PC-9 (cell line): ENCODE measurements at regions of chr9 and their contacts with region 1.

Region 1: DNA sequence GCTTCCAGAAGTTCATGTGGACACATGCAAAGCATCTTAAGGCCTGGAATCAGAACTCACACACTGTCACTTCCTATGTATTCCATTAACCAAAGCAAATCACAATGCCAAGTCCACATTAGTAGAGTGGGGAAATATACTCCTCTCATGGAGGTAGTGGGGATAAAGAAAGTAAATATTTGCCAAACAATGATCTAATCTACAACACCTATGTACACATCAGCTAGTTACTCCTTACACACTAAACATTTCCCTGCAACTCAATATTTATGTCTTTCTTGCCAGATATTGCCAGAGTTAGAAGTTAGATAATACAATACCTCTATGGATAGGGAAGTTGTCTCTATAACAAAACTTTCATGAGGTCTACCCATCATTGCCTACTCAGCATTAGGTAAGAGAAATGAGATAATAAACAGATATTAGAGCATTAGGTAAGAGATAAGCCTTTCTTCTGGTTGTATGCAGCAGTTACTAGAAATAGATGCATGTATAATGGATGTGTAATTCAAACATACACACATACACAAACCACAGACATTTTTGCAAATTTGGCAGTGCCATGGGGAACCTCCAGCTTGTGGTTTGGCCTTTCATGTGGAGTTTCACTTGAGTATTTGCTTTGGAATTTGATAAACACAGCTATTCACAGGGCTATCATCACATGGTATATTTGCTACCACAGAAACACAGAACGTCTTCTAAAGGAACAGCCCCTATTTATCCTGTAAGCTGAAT is 196.5 kb downstream of the TLE1 start:
- DNase-seq: peak; percentile 13 to 79
- H3K4me3 ChIP-seq: no peak overlapping the region
- H3K27ac ChIP-seq: 0 out of 2 replicates have a peak overlapping the region, but pooled peaks have one; percentile 1
- H3K4me1 ChIP-seq: peaks cover 28% of the 10 kb centered on the region
- H3K27me3 ChIP-seq: no peaks in the 10 kb centered on the region
- CTCF ChIP-seq: no peak

Region 2: GRCh38 chr9:81318549-81318948 is 174.3 kb before region 1 on chr9:
- CTCF ChIA-PET with region 1: no interaction called
- POLR2A ChIA-PET with region 1: no interaction called
- intact Hi-C with region 1: loop called (anchors 10 kb)
- DNase-seq: peak; percentile 6 to 82
- H3K4me3 ChIP-seq: no peak overlapping the region
- H3K27ac ChIP-seq: peak overlapping the region; percentile 16; the same call in 1 of the 2 replicates
- H3K4me1 ChIP-seq: peaks cover 18% of the 10 kb centered on the region
- H3K27me3 ChIP-seq: no peaks in the 10 kb centered on the region
- CTCF ChIP-seq: no peak

Region 3: DNA sequence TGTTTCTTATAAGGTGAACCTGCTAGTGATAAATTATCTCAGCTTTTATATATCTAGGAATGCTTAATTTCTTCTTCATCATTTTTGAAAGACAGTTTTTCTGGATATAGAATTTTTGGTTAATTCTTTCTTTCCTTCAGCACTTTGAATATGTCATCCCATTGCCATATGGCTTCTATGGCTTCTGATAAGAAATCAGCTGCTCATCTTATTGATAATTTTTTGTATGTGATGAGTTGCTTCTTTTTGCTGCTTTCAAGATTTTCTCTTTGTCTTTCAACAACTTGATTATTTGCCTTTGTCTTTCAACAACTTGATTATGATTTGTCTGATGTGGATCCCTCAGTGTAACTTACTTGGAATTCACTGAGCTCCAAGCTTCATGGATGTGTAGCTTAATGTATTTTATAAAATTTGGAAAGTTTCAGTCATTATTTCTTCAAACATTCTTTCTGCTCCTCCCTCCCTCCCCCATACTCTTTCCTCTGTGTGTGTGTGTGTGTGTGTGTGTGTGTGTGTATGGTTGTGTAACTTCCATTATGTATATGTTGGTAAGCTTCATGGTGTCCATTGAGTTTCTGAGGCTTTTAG is 47.5 kb before region 1 on chr9:
- CTCF ChIA-PET with region 1: no interaction called
- POLR2A ChIA-PET with region 1: no interaction called
- intact Hi-C with region 1: no loop called
- DNase-seq: no peak
- H3K4me3 ChIP-seq: no peak overlapping the region
- H3K27ac ChIP-seq: no peak overlapping the region
- H3K4me1 ChIP-seq: no peaks in the 10 kb centered on the region
- H3K27me3 ChIP-seq: no peaks in the 10 kb centered on the region
- CTCF ChIP-seq: no peak